ENCODE measurements at regions of chr12 and their contacts with region 1.

Region 1: DNA sequence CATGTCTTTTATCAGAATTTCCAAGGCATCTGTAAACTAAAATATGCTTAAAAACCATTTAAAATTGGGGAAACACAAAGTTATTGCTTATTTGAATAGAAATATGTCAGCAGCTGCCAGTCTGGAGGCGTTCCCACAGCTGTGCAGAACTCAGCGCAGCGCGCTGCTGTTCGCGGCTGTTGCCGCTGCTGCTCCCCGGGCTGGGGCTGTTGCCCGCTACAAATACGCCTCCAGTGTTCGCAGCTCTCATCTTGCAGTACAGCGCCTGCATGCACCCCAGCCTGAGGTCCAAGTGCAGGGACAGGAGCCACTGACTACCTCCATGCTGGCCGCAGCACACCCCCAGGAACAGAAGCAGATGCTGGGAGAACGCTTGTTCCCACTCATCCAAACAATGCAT is 216.2 kb downstream of the SLC16A7 start:
- DNase-seq: no peak
- ATAC-seq: no peak

Region 2: GRCh38 chr12:59431266-59431665 is 380.7 kb before region 1 on chr12:
- intact Hi-C with region 1: loop called (anchors 10 kb)
- DNase-seq: no peak
- ATAC-seq: no peak

Region 3: GRCh38 chr12:59858508-59859170 is 46.6 kb after region 1 on chr12:
- intact Hi-C with region 1: no loop called
- DNase-seq: no peak
- ATAC-seq: peak; percentile 20

Region 4: DNA sequence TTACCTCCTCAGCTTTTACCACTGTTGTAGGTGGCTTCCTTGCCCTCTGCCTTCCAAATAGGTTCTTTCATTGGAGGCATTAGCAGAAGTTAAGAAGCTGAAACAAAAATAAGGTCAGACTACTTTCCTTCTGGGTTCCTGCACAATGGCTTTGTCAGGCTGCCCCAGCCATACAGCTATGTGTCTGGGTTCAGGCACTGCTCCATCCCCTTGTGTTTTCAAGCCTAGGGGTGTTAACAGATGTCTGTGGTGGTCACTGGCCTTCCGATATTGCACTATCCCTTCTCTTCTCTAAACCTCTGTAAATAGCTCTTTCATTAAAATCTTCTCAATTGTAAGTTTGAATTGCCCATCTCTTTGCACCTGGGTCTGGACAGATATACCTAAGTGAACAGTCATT is 512.8 kb after region 1 on chr12:
- intact Hi-C with region 1: no loop called
- DNase-seq: no peak
- ATAC-seq: no peak

Measured in Right ventricle myocardium superior (tissue), 1 donor.